ENCODE measurements at regions of chr1 and their contacts with region 1.

Region 1: DNA sequence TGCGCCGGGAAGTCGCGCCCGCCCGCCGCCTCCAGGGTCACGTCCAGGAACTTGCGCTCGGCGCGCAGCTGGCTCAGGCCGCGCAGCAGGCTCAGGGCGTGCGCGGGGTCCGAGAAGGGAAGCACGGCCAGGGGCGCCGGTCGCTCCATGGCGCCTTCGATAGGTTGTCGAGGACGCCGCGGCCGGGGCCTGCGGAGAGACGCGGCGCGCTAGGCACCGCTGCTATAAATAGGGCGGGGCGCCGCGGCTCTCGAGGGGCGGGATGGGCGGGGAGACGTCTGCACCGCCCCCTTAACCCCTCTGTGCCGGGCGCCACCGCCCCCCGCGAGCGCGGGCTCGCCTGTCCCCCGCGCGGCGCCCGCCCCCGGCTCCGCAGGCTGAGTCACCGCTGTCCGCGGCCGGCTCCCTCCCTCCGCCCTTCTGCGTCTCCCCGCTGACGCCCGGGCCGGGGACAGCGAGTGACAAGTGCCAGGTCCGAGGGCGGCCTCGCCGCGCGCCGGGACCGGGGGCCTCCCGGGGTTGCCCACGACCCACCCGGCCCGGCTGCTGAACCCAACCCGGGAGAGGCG is at the start of gene KLHL21:
- DNase-seq: peak; percentile 65 to 93 (median 84)
- ATAC-seq: peak; percentile 48
- H3K4me3 ChIP-seq: peak within 1 kb of the TSS; percentile 95
- H3K4me3 Mint-ChIP-seq: peak within 1 kb of the TSS; percentile 100
- H3K27ac ChIP-seq: peak within 1 kb of the TSS; percentile 80 to 95
- H3K27ac Mint-ChIP-seq: peak within 1 kb of the TSS; percentile 100
- H3K4me1 ChIP-seq: peaks cover 54% of the 10 kb centered on the region
- H3K4me1 Mint-ChIP-seq: peaks cover 36% of the 10 kb centered on the region
- H3K27me3 ChIP-seq: no peaks in the 10 kb centered on the region
- H3K27me3 Mint-ChIP-seq: no peaks in the 10 kb centered on the region
- CTCF ChIP-seq: no peak
- total RNA-seq, gene KLHL21: 32.0 to 33.5 TPM

Region 2: DNA sequence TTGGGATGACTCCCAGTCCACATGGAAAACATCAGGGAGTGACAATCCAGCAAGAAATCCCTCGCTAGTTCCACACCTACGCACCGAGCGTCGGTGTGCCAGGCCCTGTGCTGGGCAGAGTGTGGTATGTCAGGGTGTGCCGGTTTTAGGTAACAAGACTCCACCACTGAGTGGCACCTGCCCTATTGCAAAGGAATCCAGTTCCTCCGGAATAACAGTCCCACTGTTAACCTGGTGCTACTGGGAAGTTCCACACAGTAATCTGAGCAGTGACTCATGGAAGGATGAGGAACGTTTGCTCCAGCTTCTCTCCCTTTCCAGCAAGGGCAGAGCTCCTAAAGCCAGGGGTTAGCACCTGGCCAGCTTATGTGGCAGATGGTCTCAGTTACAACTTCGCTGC is 382.5 kb before region 1 on chr1:
- CTCF ChIA-PET with region 1: no interaction called
- POLR2A ChIA-PET with region 1: no interaction called
- intact Hi-C with region 1: no loop called
- DNase-seq: no peak
- ATAC-seq: no peak
- H3K4me3 ChIP-seq: no peak overlapping the region
- H3K4me3 Mint-ChIP-seq: no peak overlapping the region
- H3K27ac ChIP-seq: no peak overlapping the region
- H3K27ac Mint-ChIP-seq: no peak overlapping the region
- H3K4me1 ChIP-seq: no peaks in the 10 kb centered on the region
- H3K4me1 Mint-ChIP-seq: no peaks in the 10 kb centered on the region
- H3K27me3 ChIP-seq: no peaks in the 10 kb centered on the region
- H3K27me3 Mint-ChIP-seq: peaks cover 7% of the 10 kb centered on the region
- CTCF ChIP-seq: no peak

Region 3: GRCh38 chr1:6438047-6438525 is 164.7 kb before region 1 on chr1:
- CTCF ChIA-PET with region 1: no interaction called
- POLR2A ChIA-PET with region 1: no interaction called
- intact Hi-C with region 1: no loop called
- DNase-seq: peak; percentile 56 to 85 (median 66)
- ATAC-seq: peak; percentile 65
- H3K4me3 ChIP-seq: no peak overlapping the region
- H3K4me3 Mint-ChIP-seq: peak overlapping the region; percentile 65
- H3K27ac ChIP-seq: no peak overlapping the region
- H3K27ac Mint-ChIP-seq: no peak overlapping the region
- H3K4me1 ChIP-seq: peaks cover 15% of the 10 kb centered on the region
- H3K4me1 Mint-ChIP-seq: peaks cover 9% of the 10 kb centered on the region
- H3K27me3 ChIP-seq: peaks cover 10 to 11% of the 10 kb centered on the region in 2 experiments
- H3K27me3 Mint-ChIP-seq: peaks cover 28% of the 10 kb centered on the region
- CTCF ChIP-seq: peak; percentile 97

Region 4: GRCh38 chr1:6464514-6464836 is 138.3 kb before region 1 on chr1:
- CTCF ChIA-PET with region 1: no interaction called
- POLR2A ChIA-PET with region 1: interaction called, 13 read pairs
- intact Hi-C with region 1: no loop called
- DNase-seq: peak in 11 of 14 experiments; percentile 26 to 75 (median 58)
- ATAC-seq: no peak
- H3K4me3 ChIP-seq: peak overlapping the region; percentile 83
- H3K4me3 Mint-ChIP-seq: peak overlapping the region; percentile 98
- H3K27ac ChIP-seq: peak overlapping the region; percentile 90 to 97
- H3K27ac Mint-ChIP-seq: peak overlapping the region; percentile 96
- H3K4me1 ChIP-seq: peaks cover 68% of the 10 kb centered on the region
- H3K4me1 Mint-ChIP-seq: peaks cover 61% of the 10 kb centered on the region
- H3K27me3 ChIP-seq: no peaks in the 10 kb centered on the region
- H3K27me3 Mint-ChIP-seq: no peaks in the 10 kb centered on the region
- CTCF ChIP-seq: no peak

Region 5: DNA sequence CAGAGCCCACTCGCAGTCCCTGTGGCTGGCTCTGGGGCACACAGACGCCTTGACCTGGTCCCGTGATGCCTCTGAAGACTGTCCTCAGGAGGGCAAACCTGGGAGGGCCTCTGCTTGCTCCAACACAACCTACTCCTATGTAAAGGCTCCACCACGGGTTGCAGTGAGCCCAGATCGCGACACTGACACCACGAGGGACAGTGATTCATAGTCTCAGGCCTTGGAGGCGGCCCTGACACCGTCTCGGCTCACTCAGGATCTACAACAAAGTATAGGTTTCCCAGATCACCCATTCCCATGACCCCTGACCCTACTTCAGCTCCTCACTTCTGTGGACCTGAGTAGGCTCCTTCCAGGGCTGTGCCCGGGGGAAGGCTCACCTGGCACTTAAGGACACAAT is 76.4 kb before region 1 on chr1:
- CTCF ChIA-PET with region 1: no interaction called
- POLR2A ChIA-PET with region 1: no interaction called
- intact Hi-C with region 1: no loop called
- DNase-seq: no peak
- ATAC-seq: no peak
- H3K4me3 ChIP-seq: no peak overlapping the region
- H3K4me3 Mint-ChIP-seq: no peak overlapping the region
- H3K27ac ChIP-seq: no peak overlapping the region
- H3K27ac Mint-ChIP-seq: no peak overlapping the region
- H3K4me1 ChIP-seq: no peaks in the 10 kb centered on the region
- H3K4me1 Mint-ChIP-seq: no peaks in the 10 kb centered on the region
- H3K27me3 ChIP-seq: no peaks in the 10 kb centered on the region
- H3K27me3 Mint-ChIP-seq: no peaks in the 10 kb centered on the region
- CTCF ChIP-seq: no peak

Region 6: DNA sequence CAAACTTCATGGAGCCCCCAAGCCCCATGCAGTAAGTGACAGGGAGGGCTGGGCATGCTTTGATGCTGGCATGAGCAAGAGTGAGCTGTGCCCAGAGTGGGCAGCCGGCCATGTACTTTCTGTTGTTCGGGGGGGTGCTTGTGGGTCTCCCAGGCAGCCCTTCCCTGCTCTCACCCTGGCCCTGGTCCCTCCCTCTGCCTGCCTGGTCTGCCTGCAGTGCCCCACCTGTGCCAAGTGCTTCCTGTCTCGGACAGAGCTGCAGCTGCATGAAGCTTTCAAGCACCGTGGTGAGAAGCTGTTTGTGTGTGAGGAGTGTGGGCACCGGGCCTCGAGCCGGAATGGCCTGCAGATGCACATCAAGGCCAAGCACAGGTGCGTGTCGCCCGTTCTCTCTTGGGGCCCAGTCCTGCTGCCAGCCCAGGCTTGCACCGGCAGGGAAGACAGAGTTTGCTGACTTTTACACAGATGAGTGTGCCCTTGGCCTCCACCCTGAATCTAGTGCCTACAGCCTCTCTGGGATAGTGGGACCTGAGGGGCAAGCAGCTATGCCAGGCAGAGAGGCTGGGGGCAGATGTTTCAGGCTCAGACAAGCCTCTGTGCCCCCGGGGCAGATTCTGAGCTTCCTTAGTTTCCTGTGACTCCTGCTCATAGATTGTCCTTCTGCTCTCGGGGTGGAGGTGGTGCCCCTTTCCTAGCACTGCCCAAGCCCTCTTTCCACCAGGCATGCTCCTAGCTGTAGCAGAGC is 15.3 kb before region 1 on chr1:
- CTCF ChIA-PET with region 1: interaction called, 4 read pairs
- POLR2A ChIA-PET with region 1: interaction called, 139 read pairs
- intact Hi-C with region 1: no loop called
- DNase-seq: no peak
- ATAC-seq: no peak
- H3K4me3 ChIP-seq: no peak overlapping the region
- H3K4me3 Mint-ChIP-seq: peak overlapping the region; percentile 11
- H3K27ac ChIP-seq: peak overlapping the region in 1 of 2 donors; percentile 21
- H3K27ac Mint-ChIP-seq: peak overlapping the region; percentile 55
- H3K4me1 ChIP-seq: peaks cover 52% of the 10 kb centered on the region
- H3K4me1 Mint-ChIP-seq: peaks cover 37% of the 10 kb centered on the region
- H3K27me3 ChIP-seq: no peaks in the 10 kb centered on the region
- H3K27me3 Mint-ChIP-seq: no peaks in the 10 kb centered on the region
- CTCF ChIP-seq: no peak

Region 7: GRCh38 chr1:6624710-6625583 is 22.2 kb after region 1 on chr1 and contains the start of gene THAP3:
- CTCF ChIA-PET with region 1: interaction called, 6 read pairs
- POLR2A ChIA-PET with region 1: interaction called, 28 read pairs
- intact Hi-C with region 1: loop called (anchors 1 to 2 kb)
- DNase-seq: peak; percentile 86 to 95 (median 90)
- ATAC-seq: peak; percentile 98
- H3K4me3 ChIP-seq: peak within 1 kb of the TSS; percentile 72
- H3K4me3 Mint-ChIP-seq: peak within 1 kb of the TSS; percentile 94
- H3K27ac ChIP-seq: peak within 1 kb of the TSS in 1 of 2 donors; percentile 38
- H3K27ac Mint-ChIP-seq: peak within 1 kb of the TSS; percentile 84
- H3K4me1 ChIP-seq: peaks cover 31% of the 10 kb centered on the region
- H3K4me1 Mint-ChIP-seq: peaks cover 29% of the 10 kb centered on the region
- H3K27me3 ChIP-seq: no peaks in the 10 kb centered on the region
- H3K27me3 Mint-ChIP-seq: no peaks in the 10 kb centered on the region
- CTCF ChIP-seq: peak; percentile 31
- total RNA-seq, gene THAP3: 15.2 to 18.7 TPM

Region 8: DNA sequence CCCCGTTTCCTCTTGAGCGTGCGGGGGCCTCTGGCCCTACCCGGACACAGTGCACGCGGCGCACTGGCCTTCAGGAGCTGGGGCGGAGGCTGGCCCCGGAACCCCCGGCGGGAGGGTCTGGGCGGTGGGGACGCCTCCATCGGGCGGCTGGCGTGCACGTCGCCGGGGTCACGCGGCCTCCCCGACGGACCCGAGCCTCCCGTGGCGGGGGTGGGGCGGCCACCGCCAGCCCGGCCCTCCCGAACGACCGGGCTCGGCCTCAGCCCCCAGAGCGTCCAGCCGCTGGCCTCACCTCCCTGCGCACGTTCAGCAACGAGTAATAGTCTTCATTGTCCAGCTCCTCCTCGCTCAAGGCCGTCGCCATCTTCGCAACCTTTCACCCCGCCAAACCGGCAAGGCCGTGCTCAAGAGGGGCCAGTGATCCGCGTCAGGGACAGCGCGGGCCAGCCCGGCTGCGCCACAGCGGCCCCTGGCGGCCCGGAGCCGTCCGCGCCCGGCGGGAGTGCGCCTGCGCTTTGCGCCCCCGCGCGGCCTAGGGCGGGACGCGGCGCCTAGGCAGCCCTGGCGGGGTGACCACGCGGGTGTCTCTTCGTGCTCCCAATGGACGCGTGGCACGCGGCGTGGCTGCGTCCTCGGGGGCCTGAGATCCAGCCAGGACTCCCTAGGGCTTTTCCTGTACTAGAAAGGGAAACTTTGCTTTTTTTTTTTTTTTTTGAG is 98.8 kb after region 1 on chr1 and contains the start of gene DNAJC11:
- CTCF ChIA-PET with region 1: interaction called, 4 read pairs
- POLR2A ChIA-PET with region 1: interaction called, 7 read pairs
- intact Hi-C with region 1: loop called in 1 of 2 experiments (anchors 1 kb)
- DNase-seq: peak; percentile 80 to 95 (median 88)
- ATAC-seq: peak; percentile 98
- H3K4me3 ChIP-seq: peak within 1 kb of the TSS; percentile 86
- H3K4me3 Mint-ChIP-seq: peak within 1 kb of the TSS; percentile 96
- H3K27ac ChIP-seq: peak within 1 kb of the TSS in 1 of 2 donors; percentile 60
- H3K27ac Mint-ChIP-seq: peak within 1 kb of the TSS; percentile 76
- H3K4me1 ChIP-seq: peaks cover 18% of the 10 kb centered on the region
- H3K4me1 Mint-ChIP-seq: peaks cover 43% of the 10 kb centered on the region
- H3K27me3 ChIP-seq: no peaks in the 10 kb centered on the region
- H3K27me3 Mint-ChIP-seq: no peaks in the 10 kb centered on the region
- CTCF ChIP-seq: peak; percentile 55
- total RNA-seq, gene DNAJC11: 20.6 to 24.0 TPM

Measured in CD4-positive, alpha-beta T cell (primary cell).